ENCODE measurements at regions of chr7 and their contacts with region 1.

Region 1: GRCh38 chr7:15433151-15433550 is 128.7 kb downstream of the AGMO start:
- DNase-seq: no peak
- H3K4me3 ChIP-seq: no peak overlapping the region
- H3K27ac ChIP-seq: no peak overlapping the region
- H3K4me1 ChIP-seq: no peaks in the 10 kb centered on the region
- H3K27me3 ChIP-seq: no peaks in the 10 kb centered on the region
- CTCF ChIP-seq: no peak

Region 2: GRCh38 chr7:15389073-15389472 is 44.1 kb before region 1 on chr7:
- CTCF ChIA-PET with region 1: no interaction called
- dilution Hi-C with region 1: no loop called
- in situ Hi-C with region 1: no loop called
- intact Hi-C with region 1: no loop called
- DNase-seq: no peak
- H3K4me3 ChIP-seq: no peak overlapping the region
- H3K27ac ChIP-seq: no peak overlapping the region
- H3K4me1 ChIP-seq: no peaks in the 10 kb centered on the region
- H3K27me3 ChIP-seq: no peaks in the 10 kb centered on the region
- CTCF ChIP-seq: no peak

Region 3: GRCh38 chr7:15464667-15465121 is 31.5 kb after region 1 on chr7:
- CTCF ChIA-PET with region 1: no interaction called
- dilution Hi-C with region 1: no loop called
- in situ Hi-C with region 1: no loop called
- intact Hi-C with region 1: no loop called
- DNase-seq: no peak
- H3K4me3 ChIP-seq: no peak overlapping the region
- H3K27ac ChIP-seq: no peak overlapping the region
- H3K4me1 ChIP-seq: no peaks in the 10 kb centered on the region
- H3K27me3 ChIP-seq: no peaks in the 10 kb centered on the region
- CTCF ChIP-seq: no peak

Region 4: DNA sequence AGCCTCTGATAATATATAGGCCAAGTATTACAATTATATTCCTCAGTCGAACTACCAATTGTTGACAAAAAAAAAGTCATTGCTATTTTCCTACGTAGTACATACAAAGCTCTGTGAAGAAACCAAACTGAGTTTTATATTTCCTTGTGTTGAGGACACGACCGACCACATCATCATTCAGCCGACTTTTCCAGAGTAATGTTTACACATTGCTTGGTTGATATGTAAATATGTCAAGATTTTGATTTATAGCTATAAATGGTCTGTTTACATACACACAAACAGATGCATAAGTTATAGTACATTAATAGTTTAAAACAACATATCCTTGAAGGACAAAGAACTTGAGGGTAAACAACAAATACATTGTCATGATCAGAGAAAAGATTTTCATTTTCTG is 866.7 kb after region 1 on chr7:
- CTCF ChIA-PET with region 1: interaction called, 10 read pairs
- dilution Hi-C with region 1: no loop called
- in situ Hi-C with region 1: no loop called
- intact Hi-C with region 1: no loop called
- DNase-seq: no peak
- H3K4me3 ChIP-seq: no peak overlapping the region
- H3K27ac ChIP-seq: no peak overlapping the region
- H3K4me1 ChIP-seq: no peaks in the 10 kb centered on the region
- H3K27me3 ChIP-seq: no peaks in the 10 kb centered on the region
- CTCF ChIP-seq: no peak